ENCODE measurements at regions of chr6 and their contacts with region 1.

Region 1: GRCh38 chr6:45132059-45132458 is 196.1 kb upstream of the RUNX2 start:
- H3K4me3 ChIP-seq: no peak overlapping the region
- H3K27ac ChIP-seq: no peak overlapping the region
- H3K4me1 ChIP-seq: no peaks in the 10 kb centered on the region
- CTCF ChIP-seq: no peak

Region 2: DNA sequence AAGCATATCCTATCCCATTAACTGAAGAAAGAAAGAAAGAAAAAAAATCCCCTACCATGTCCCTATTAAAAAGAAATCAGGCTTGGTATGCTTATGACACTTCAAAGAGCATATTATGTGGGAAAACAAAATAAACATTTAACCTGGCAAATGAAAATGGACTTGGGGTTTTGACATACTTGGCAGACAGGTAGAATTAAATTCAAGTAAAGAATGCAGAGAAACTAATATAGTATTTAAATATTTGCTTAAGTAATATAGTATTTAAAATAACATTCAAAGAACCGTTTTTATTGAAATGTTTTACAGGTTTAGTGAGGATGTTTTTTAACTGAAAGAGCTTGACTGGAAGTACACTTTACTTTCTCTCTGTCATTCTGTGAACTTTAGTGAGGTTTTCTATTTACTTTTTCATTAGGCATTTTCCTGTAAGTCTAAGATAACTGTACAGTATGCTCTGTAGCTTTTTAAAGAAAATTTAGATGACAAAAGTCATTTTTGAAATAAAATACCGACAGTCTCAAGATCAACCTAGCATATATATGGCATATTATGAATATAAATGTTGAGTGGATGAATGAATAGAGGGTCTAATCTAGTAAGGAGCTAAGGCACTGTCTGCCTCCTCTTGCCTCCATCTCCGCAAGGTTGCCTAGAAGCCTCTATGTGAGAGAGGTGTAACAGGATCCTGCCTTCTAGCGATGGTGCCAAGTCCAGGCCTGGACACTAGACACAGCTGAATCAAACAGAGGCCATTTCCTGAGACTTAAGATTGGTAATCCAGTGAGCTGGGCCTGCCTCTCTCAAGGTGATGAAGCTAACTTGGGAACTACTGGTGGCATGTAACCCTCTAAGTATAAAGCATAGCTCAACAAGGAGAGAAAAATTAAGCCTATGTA is 148.3 kb before region 1 on chr6:
- CTCF ChIA-PET with region 1: no interaction called
- POLR2A ChIA-PET with region 1: no interaction called
- H3K4me3 ChIP-seq: no peak overlapping the region
- H3K27ac ChIP-seq: no peak overlapping the region
- H3K4me1 ChIP-seq: no peaks in the 10 kb centered on the region
- CTCF ChIP-seq: no peak

Region 3: DNA sequence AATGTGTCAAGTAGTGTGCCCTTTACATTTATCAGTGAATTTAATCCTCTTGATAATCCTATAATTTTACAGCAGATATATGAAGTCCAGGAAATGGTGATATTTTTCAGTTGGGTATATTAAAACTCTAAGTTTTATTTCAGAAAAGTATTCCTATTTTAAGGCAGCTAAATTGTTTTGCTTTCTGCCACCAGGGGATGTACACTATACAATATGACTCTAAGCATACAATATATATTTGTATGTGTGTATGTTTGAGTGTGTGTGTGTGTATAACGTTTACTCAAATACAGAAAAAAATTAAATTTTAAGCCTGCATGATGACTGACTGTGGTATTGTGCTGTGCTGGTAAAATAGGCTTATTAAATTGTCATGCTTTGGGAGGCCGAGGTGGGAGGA is 94.0 kb after region 1 on chr6:
- CTCF ChIA-PET with region 1: no interaction called
- POLR2A ChIA-PET with region 1: no interaction called
- H3K4me3 ChIP-seq: no peak overlapping the region
- H3K27ac ChIP-seq: no peak overlapping the region
- H3K4me1 ChIP-seq: no peaks in the 10 kb centered on the region
- CTCF ChIP-seq: no peak

Region 4: GRCh38 chr6:45988635-45989034 is 856.6 kb after region 1 on chr6:
- CTCF ChIA-PET with region 1: no interaction called
- POLR2A ChIA-PET with region 1: interaction called, 10 read pairs
- H3K4me3 ChIP-seq: no peak overlapping the region
- H3K27ac ChIP-seq: no peak overlapping the region
- H3K4me1 ChIP-seq: no peaks in the 10 kb centered on the region
- CTCF ChIP-seq: no peak